HEK293 (cell line): ENCODE measurements at regions of chr5 and their contacts with region 1.

Region 1: GRCh38 chr5:141650851-141651727 is at the start of gene FCHSD1:
- H3K4me3 ChIP-seq: peak within 1 kb of the TSS; percentile 52
- H3K27ac ChIP-seq: no peak within 1 kb of the TSS
- H3K4me1 ChIP-seq: no peaks in the 10 kb centered on the region
- CTCF ChIP-seq: no peak

Region 2: GRCh38 chr5:141475625-141476131 is 175.4 kb before region 1 on chr5 and contains the start of gene PCDHGC3:
- CTCF ChIA-PET with region 1: no interaction called
- POLR2A ChIA-PET with region 1: no interaction called
- H3K4me3 ChIP-seq: peak within 1 kb of the TSS; percentile 44
- H3K27ac ChIP-seq: peak within 1 kb of the TSS; percentile 43; the same call in 1 of the 2 replicates
- H3K4me1 ChIP-seq: 0 out of 2 replicates have a peak, but pooled peaks cover 4% of the 10 kb centered on the region
- CTCF ChIP-seq: peak; percentile 59

Region 3: GRCh38 chr5:141636413-141637122 is 14.5 kb before region 1 on chr5 and contains the starts of genes HDAC3 and RELL2:
- CTCF ChIA-PET with region 1: interaction called, 3 read pairs
- POLR2A ChIA-PET with region 1: interaction called, 23 read pairs
- H3K4me3 ChIP-seq: peak within 1 kb of the TSS; percentile 97
- H3K27ac ChIP-seq: peak within 1 kb of the TSS; percentile 63; the same call in 1 of the 2 replicates
- H3K4me1 ChIP-seq: peaks cover 6% of the 10 kb centered on the region
- CTCF ChIP-seq: no peak

Region 4: GRCh38 chr5:141683596-141684141 is 32.6 kb after region 1 on chr5:
- CTCF ChIA-PET with region 1: no interaction called
- POLR2A ChIA-PET with region 1: no interaction called
- H3K4me3 ChIP-seq: no peak overlapping the region
- H3K27ac ChIP-seq: no peak overlapping the region
- H3K4me1 ChIP-seq: no peaks in the 10 kb centered on the region
- CTCF ChIP-seq: no peak

Region 5: DNA sequence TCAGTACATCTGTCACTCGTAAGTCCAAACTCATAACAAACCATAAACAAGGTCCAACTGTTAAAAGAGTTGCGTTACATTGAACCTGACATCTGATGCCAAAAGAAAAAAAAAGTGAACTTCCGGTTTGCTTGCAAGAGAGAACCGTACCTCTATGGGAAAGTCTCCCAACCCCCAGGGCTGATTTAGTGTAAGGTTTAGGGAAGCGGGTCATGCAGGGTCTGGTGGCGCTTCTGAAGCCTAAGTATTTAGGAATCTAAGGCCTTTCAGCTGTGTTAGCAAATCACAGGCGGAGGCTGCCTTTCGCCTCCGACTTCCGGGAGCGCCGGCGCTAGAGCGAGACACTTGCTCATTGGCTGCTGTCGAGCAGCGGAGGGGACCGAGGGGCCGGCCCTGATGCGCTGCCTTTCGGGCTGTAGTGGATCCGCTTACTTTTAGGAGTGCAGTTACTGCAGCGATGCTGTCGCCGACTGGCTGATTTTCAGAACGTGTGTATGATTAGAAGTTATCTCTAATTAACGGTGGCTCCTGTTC is 373.7 kb after region 1 on chr5:
- CTCF ChIA-PET with region 1: no interaction called
- POLR2A ChIA-PET with region 1: no interaction called
- H3K4me3 ChIP-seq: peak overlapping the region; percentile 35
- H3K27ac ChIP-seq: peak overlapping the region; percentile 77
- H3K4me1 ChIP-seq: 0 out of 2 replicates have a peak, but pooled peaks cover 3% of the 10 kb centered on the region
- CTCF ChIP-seq: no peak